A549 (cell line): ENCODE measurements at regions of chrX and their contacts with region 1.

Region 1: DNA sequence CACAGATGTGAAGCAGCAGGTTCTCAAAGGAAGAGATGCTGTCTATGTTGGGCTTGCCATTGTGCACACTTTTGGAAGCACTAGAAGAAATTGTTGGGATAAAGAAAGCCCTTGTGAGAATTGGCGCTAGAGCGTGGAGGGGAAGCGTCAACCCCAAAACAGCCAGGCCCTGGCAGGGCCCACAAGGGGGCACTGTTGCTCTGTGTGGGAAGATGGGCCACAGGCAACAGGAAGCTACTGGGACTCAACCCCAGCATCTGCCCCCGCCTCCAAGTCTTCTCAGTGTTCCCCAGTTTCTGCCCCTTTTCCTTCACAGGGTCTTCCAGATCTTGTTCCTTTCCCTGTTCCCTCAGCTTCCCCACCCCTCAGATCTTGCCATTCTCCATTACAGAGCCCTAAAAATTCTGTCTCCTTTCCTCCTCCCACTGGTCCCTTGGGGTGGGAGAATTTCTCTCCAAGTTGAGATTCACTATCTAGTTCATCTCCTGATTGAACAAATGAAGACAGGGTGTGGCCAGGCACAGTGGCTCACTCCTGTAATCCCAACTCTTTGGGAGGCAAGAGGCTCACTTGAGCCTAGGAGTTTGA is 85.5 kb downstream of the STARD8 start:
- DNase-seq: peak; percentile 38 to 64
- ATAC-seq: peak; percentile 86 to 98; a peak in 5 of 6 replicates
- H3K4me3 ChIP-seq: no peak overlapping the region
- H3K27ac ChIP-seq: no peak overlapping the region
- H3K4me1 ChIP-seq: no peaks in the 10 kb centered on the region
- CTCF ChIP-seq: peak; percentile 67
- EP300 ChIP-seq: no peak
- POLR2A ChIP-seq: no peak
- RAD21 ChIP-seq: peak; percentile 75

Region 2: DNA sequence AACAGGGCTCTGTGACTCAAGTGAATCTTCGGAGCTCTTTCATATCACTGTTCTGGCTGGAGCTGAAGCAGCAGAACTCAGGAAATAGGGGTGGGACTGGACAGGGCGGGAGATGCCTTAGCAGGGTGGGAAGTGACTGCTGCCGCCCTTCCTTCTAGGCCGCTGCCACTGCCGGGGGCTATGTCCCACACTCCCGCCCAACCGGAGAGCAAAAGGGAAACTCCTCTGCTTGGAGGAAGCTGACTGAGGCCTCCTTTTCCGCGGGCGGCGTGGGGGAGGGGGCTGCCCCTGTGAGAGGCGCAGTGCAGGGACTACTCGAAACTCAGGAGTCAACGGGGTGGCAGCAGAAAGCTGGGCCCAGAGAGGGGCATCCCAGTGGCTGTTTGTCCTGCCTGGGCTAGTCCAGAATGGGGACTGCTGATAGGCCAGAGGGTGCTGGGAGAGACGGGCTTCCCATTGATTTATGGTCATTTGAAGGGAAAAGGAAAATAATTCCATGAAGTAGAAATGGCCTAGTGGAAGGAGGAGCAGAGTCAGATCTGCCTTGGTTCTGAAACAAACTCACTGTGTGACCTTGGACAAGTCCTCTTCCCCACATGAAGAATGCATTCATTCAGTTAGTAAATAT is 48.6 kb before region 1 on chrX:
- CTCF ChIA-PET with region 1: no interaction called
- POLR2A ChIA-PET with region 1: no interaction called
- DNase-seq: no peak
- ATAC-seq: no peak
- H3K4me3 ChIP-seq: no peak overlapping the region
- H3K27ac ChIP-seq: no peak overlapping the region
- H3K4me1 ChIP-seq: peaks cover 7% of the 10 kb centered on the region; the same call in 2 of the 3 replicates
- CTCF ChIP-seq: no peak
- EP300 ChIP-seq: no peak
- POLR2A ChIP-seq: no peak
- RAD21 ChIP-seq: no peak

Region 3: GRCh38 chrX:68717663-68718442 is 15.1 kb before region 1 on chrX:
- CTCF ChIA-PET with region 1: interaction called, 10 read pairs
- POLR2A ChIA-PET with region 1: no interaction called
- DNase-seq: no peak
- ATAC-seq: no peak
- H3K4me3 ChIP-seq: no peak overlapping the region
- H3K27ac ChIP-seq: no peak overlapping the region
- H3K4me1 ChIP-seq: no peaks in the 10 kb centered on the region
- CTCF ChIP-seq: no peak
- EP300 ChIP-seq: no peak
- POLR2A ChIP-seq: no peak
- RAD21 ChIP-seq: no peak